ENCODE measurements at regions of chr13 and their contacts with region 1.

Region 1: DNA sequence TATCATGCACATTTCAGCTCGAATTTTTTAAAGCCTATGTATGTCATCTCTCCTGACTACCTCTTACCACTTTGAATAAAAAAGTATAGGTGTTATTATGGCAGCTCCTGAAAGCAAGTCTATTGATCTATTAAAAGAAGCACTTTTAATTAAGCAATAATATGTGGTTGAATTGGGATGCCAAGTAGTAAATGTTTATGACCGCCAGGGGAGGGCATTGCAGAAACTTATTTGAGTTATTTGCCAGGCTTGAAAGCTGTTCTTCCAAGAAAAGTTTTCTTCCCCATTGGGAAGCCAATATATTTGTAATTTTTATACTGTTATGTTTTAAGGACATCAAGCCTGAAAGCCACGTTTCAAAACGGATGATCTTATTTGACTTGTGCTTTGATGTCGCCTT is 88.1 kb upstream of the SOX21 start:
- DNase-seq: no peak

Region 2: DNA sequence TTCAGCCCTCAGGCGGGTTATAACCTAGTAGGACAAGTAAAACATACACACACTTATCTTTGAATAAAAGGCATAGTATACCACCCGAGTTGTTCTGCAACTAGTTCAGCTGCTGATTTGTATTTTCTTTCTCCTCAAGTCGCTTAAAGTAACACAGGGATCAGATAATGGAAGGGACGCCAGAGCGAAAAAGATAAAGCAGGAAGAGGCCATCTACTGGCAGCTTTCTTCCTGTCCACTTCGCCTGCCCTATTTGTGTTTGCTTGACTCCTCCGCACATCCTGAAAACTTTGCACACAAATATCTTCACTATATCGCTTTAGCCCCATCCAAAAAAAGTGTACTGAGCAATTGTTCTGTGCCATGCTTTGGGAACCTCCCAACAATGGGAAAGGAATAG is 149.9 kb after region 1 on chr13:
- intact Hi-C with region 1: loop called (anchors 10 kb)
- DNase-seq: peak in 1 of 10 donors; percentile 25

Measured in posterior cingulate gyrus (tissue), 11 donors.